Activated B cell treated with CpG ODN at 0.5 μM for 24 hours (primary cell): ENCODE measurements at regions of chr18 and their contacts with region 1.

Region 1: DNA sequence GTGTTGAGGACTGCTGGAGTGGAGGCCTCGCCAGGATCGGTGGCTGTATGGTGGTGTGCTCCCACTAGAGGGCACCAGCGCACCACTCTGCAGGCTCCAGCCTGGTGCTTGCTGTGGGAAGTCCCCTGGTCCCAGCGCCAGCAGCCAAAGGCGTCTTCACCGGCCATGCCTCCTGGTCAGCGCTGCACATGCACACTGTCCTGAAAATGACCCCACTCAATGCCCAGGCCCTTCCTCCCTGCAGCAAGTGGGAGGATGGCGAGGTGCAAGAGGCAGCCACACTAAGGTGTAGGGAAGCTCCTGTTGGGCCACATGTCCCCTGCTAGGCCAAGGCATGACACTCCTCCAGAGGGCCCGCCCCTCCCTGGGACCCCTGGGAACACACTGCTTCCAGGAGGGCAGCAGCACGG is 136.5 kb downstream of the CTIF start:
- DNase-seq: peak; percentile 78
- ATAC-seq: peak; percentile 98
- H3K4me3 Mint-ChIP-seq: no peak overlapping the region
- H3K27ac Mint-ChIP-seq: no peak overlapping the region
- H3K4me1 Mint-ChIP-seq: peaks cover 3% of the 10 kb centered on the region
- H3K27me3 Mint-ChIP-seq: no peaks in the 10 kb centered on the region
- CTCF ChIP-seq: no peak

Region 2: DNA sequence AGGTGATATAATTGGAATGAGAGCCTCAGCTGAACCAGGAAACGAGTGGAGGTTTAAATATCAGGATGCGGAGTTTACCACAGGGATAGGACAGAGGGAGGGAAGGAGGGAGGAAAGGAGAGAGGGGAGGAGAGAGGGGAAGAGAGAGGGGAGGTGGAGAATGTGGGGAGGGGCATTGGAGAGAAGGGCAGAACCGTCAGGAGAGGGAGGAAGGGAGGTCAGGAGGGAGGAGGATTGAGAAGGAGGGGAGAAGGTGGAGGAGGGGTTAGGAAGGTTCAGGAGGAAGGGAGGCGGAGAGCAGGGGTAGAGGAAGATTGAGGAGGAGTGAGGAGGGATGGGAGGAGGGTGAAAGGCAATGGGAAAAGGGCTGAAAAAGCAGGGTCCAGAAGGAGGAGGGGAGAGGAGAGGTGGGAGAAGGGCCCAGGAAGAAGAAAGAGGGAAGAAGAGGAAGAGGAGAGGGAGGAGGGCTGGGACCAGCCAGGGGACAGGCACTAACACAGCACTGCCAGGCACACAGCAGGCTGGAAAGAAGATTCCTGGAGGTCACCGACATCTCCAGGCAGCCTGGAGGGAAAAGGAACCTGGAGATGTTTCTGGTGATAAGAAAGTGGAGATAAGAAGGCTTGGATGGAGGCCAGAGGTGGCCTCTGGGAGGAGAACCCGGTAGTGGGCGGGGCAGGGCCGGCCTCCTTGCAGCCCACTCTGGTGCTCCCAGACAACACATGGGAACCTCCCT is 568.2 kb before region 1 on chr18:
- CTCF ChIA-PET with region 1: no interaction called
- POLR2A ChIA-PET with region 1: no interaction called
- intact Hi-C with region 1: no loop called
- DNase-seq: no peak
- ATAC-seq: no peak
- H3K4me3 Mint-ChIP-seq: no peak overlapping the region
- H3K27ac Mint-ChIP-seq: no peak overlapping the region
- H3K4me1 Mint-ChIP-seq: no peaks in the 10 kb centered on the region
- H3K27me3 Mint-ChIP-seq: peaks cover 16% of the 10 kb centered on the region
- CTCF ChIP-seq: no peak

Region 3: DNA sequence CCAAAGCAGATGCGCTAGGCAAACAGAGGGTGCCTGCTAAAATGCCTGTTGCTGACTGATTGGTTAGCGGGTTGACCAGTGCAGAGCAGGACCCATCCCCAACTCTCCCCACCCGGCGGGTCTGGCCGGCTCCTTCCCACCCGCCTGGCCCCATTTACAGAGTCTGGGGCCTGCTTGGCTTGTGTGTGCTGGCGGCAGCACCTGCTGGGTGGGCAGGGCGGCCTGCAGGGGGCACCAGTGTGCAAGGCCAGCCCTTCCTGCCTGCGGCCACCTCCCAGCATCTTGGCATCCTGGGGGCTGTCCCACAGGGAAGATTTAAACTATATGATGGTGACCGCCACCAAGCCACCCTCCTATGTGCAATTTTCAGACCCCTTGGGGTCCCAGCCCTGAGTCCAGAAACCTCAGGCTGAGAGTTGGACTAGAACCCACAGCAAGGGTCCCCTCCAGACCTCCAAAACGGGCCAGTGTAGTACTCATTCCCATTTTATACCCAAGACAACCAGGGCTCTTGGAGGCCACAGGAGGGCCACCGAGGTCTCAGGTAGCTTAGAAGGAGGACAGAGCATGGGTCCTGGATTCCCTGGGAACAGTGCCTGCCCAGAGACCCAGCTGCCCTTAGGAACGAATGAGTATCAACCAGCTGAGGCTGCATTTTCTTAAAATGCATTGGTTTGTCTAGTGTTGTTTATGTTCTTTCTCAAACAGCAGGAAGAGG is 101.8 kb after region 1 on chr18:
- CTCF ChIA-PET with region 1: interaction called, 5 read pairs
- POLR2A ChIA-PET with region 1: no interaction called
- intact Hi-C with region 1: loop called (anchors 2 kb)
- DNase-seq: peak; percentile 63
- ATAC-seq: peak; percentile 85
- H3K4me3 Mint-ChIP-seq: no peak overlapping the region
- H3K27ac Mint-ChIP-seq: no peak overlapping the region
- H3K4me1 Mint-ChIP-seq: peaks cover 18% of the 10 kb centered on the region
- H3K27me3 Mint-ChIP-seq: no peaks in the 10 kb centered on the region
- CTCF ChIP-seq: peak; percentile 66

Region 4: GRCh38 chr18:48790226-48790874 is 115.0 kb after region 1 on chr18:
- CTCF ChIA-PET with region 1: no interaction called
- POLR2A ChIA-PET with region 1: no interaction called
- intact Hi-C with region 1: no loop called
- DNase-seq: peak; percentile 9
- ATAC-seq: no peak
- H3K4me3 Mint-ChIP-seq: no peak overlapping the region
- H3K27ac Mint-ChIP-seq: no peak overlapping the region
- H3K4me1 Mint-ChIP-seq: peaks cover 37% of the 10 kb centered on the region
- H3K27me3 Mint-ChIP-seq: no peaks in the 10 kb centered on the region
- CTCF ChIP-seq: no peak

Region 5: DNA sequence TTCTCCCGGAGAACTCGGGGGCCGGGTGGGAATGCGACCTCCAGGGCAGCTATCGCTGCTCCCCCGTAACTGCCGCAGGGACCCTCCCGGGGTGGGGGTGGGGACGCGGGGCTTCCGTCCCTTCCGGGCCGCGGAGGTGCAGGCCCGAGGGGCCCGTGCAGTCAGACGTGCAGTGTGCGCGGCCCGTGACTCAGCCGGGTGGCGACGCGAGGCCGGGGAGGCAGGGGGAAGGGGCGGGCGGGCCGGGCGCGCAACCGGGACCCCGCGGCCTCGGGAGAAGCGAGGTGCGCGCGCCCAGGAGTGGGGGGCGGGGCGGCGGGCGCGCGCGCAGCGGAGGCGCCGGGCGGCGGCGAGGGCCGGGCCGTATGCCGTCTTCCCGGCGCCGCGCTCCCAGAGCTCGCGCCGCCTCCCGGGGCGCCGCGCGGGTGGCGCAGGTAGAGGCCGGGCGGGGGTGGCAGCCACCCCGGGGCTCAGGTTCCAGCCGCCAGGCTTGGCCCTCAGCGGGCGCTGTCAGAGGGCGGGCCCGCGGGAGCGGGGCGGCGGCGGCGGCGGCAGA is 300.4 kb after region 1 on chr18:
- CTCF ChIA-PET with region 1: no interaction called
- POLR2A ChIA-PET with region 1: no interaction called
- intact Hi-C with region 1: loop called (anchors 5 kb)
- DNase-seq: peak; percentile 44
- ATAC-seq: peak; percentile 78
- H3K4me3 Mint-ChIP-seq: peak overlapping the region; percentile 38
- H3K27ac Mint-ChIP-seq: no peak overlapping the region
- H3K4me1 Mint-ChIP-seq: peaks cover 14% of the 10 kb centered on the region
- H3K27me3 Mint-ChIP-seq: peaks cover 16% of the 10 kb centered on the region
- CTCF ChIP-seq: no peak

Region 6: DNA sequence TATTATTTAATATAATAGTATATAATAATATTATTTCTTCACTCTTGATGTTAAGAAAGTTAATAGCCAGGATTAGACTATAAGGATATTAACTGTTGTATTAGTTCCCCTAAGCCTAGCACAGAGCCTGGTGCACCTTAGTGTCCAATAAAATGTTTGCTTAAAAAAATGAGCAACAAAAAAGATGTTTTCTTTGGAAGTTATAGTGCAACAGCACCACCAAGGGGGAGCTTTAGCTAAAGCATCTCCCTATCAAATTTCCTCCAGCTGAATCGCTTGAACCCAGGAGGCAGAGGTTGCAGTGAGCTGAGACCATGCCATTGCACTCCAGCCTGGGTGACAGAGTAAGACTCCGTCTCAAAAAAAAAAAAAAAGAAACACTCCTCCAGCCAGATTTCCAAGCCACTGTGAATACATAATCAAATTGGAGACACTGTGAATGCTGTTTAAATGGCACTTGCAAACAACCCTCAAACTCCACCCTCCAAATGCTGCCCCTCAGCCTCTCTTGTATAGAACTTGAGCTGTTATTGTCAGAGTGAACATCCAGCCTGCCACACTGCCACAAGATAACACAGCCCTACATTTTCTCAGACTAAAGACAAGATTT is 563.2 kb after region 1 on chr18:
- CTCF ChIA-PET with region 1: interaction called, 3 read pairs
- POLR2A ChIA-PET with region 1: no interaction called
- intact Hi-C with region 1: loop called (anchors 1 kb)
- DNase-seq: no peak
- ATAC-seq: no peak
- H3K4me3 Mint-ChIP-seq: no peak overlapping the region
- H3K27ac Mint-ChIP-seq: no peak overlapping the region
- H3K4me1 Mint-ChIP-seq: no peaks in the 10 kb centered on the region
- H3K27me3 Mint-ChIP-seq: no peaks in the 10 kb centered on the region
- CTCF ChIP-seq: no peak

Region 7: DNA sequence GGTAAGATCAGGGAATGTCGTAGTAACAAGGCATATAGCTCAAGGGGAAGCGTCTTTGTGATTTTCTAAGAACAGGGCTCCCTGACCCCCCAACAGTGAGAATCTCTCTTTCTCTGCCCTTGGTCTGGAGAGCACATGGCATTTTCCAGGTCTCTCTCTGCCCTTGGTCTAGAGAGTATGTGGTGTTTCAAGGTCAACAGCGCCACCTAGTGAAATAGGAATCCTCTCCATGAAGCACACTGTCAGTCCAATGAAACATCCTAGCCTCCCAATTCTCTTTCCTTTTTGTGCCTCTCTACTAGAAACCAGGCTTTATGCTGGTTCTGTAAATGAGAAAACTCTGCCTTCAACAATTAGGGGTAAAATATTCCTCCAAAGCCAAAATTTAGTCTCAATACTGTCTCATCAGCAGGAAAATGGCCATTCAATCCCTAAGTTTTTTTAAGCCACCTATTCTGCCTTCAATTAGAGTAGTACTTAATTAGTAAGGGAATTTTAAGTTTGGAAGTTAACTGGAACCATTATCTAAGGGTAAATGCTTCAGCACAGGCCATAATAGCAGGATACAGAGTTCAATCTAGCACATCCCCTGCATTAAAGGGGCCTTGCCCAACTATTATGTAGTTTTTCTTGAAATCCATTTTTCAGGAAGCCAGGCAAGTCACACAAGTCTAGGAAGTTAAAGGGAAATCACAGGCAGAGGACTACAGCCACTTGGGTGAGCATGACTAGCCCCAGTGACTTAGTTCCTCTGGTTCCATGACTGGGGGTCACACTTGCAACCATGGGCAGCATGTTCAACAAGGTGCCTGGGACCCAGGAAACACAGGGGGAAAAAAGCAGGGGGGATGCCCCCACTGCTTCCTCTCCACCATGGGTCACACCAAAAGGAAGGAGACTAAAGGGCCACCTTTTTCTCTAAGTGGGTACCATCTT is 772.7 kb after region 1 on chr18:
- CTCF ChIA-PET with region 1: interaction called, 6 read pairs
- POLR2A ChIA-PET with region 1: no interaction called
- intact Hi-C with region 1: loop called (anchors 1 kb)
- DNase-seq: no peak
- ATAC-seq: no peak
- H3K4me3 Mint-ChIP-seq: no peak overlapping the region
- H3K27ac Mint-ChIP-seq: no peak overlapping the region
- H3K4me1 Mint-ChIP-seq: peaks cover 6% of the 10 kb centered on the region
- H3K27me3 Mint-ChIP-seq: no peaks in the 10 kb centered on the region
- CTCF ChIP-seq: no peak

Region 8: GRCh38 chr18:49858309-49859020 is 1183.1 kb after region 1 on chr18:
- CTCF ChIA-PET with region 1: interaction called, 7 read pairs
- POLR2A ChIA-PET with region 1: no interaction called
- intact Hi-C with region 1: loop called (anchors 1 kb)
- DNase-seq: no peak
- ATAC-seq: no peak
- H3K4me3 Mint-ChIP-seq: no peak overlapping the region
- H3K27ac Mint-ChIP-seq: no peak overlapping the region
- H3K4me1 Mint-ChIP-seq: no peaks in the 10 kb centered on the region
- H3K27me3 Mint-ChIP-seq: no peaks in the 10 kb centered on the region
- CTCF ChIP-seq: no peak

Region 9: DNA sequence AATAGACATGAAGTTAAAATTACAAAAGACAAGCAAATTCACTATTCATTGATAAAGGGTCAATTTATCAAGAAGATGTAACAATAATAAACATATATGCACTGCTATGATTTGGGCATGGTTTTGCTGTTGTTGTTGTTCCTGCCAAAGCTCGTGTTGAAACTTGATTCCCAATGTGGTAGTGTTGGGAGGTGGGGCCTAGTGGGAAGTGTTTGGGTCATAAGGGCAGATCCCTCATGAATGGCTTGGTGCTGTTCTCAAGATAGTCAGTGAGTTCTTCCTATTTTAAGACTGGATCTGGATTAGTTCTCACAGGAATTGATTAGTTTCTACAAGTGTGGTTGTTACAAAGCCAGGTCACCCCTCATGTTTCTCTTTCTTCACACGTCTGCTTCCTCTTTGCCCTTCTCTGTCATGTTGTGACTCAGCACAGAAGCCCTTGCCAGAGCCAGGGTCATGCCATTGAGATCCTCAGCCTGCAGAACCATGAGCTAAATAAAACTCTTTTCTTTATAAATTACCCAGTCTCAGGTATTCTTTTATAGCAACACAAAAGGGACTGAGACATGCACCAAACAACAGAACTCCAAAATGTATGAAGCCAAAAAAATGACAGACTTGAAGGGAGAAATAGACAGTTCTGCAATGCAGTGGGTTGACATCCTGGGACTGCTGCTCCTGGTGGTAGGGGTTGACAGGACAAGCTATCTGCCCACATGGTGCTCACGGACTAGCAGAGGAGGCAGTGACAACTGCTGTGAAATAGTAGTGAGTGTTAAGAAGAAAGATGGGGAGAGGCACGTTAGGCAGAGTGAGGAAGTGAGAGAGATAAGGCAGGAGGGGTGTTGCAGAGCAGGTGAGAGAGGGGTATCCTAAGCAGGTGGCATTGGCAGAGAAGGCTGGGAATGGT is 1680.9 kb after region 1 on chr18:
- CTCF ChIA-PET with region 1: interaction called, 3 read pairs
- POLR2A ChIA-PET with region 1: no interaction called
- intact Hi-C with region 1: loop called (anchors 1 kb)
- DNase-seq: no peak
- ATAC-seq: peak; percentile 75
- H3K4me3 Mint-ChIP-seq: peak overlapping the region; percentile 50
- H3K27ac Mint-ChIP-seq: peak overlapping the region; percentile 30
- H3K4me1 Mint-ChIP-seq: peaks cover 19% of the 10 kb centered on the region
- H3K27me3 Mint-ChIP-seq: peaks cover 6% of the 10 kb centered on the region
- CTCF ChIP-seq: no peak